PC-9 (cell line): ENCODE measurements at regions of chr10 and their contacts with region 1.

Region 1: DNA sequence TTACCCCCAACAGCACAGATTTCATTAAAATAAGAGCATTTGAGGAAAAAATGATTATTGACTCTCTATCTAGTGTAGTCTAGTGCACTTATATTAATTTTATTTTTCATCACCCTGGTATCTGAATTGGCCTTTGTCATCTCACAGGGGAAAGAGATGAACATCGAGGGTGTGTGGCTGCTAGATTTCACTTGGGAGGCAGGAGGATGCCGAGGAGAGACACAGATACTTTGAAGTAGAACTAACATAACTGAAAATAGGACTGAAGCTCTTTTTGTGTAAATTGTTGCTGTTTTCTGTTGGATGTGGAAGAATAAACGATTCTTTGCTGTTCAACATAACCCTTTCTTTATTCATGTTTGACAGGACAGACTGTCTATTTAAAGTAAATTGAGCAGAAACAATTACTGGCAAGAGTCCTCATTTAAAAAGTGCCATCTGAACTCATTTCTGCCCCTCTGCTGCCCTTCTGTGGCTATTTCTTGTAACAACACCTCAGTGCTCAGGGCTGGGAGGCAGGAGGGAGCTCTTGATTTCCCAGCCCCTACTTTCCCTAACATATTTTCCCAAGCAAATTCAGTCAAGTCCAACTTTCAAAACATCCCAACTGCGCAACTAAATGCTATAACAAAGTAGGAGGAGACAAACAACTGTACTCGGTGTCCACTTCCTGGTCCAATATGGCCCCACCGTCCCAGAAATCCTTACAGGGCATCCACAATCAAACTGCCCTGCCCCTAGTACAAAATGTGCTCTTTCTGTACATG is 15.6 kb downstream of the LYZL1 start:
- DNase-seq: peak; percentile 44 to 64
- H3K4me3 ChIP-seq: no peak overlapping the region
- H3K27ac ChIP-seq: no peak overlapping the region
- H3K4me1 ChIP-seq: 0 out of 2 replicates have a peak, but pooled peaks cover 4% of the 10 kb centered on the region
- H3K27me3 ChIP-seq: no peaks in the 10 kb centered on the region
- CTCF ChIP-seq: peak; percentile 78

Region 2: DNA sequence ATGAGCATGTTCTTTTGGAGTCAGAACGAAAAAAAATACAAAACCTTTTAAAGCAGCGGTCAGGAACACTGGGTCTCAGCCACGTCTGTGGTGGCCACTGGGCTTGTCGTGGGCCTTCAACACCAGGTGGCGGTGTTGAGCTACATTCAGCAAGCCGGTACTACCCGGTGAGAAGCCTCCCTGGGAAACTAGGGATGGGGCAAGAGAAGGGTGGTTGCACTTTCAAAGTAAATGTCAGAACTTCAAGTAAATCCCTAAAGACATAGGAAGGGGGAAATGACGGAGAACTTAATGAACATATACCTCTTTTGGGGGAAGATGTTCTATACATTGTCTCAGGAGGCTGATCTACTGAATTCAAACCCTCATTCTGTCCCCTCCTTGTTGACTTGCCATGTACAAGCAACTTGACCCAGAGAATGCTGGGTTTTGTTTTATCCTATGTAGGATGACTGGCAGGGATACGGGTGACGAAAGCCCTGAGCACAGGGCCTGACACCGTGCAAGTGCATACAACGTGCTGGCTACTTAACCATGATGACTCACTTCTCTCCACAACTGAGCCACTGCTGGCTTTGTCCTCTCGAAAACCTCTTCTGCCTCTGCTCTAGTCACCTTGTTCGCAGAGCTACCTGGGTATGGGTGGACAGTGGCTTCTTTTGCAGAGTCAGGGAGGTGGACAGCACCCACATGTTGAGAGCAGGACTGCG is 676.1 kb before region 1 on chr10:
- CTCF ChIA-PET with region 1: interaction called, 5 read pairs
- POLR2A ChIA-PET with region 1: no interaction called
- intact Hi-C with region 1: loop called (anchors 1 kb)
- DNase-seq: peak; percentile 51 to 74
- H3K4me3 ChIP-seq: no peak overlapping the region
- H3K27ac ChIP-seq: no peak overlapping the region
- H3K4me1 ChIP-seq: peaks cover 7% of the 10 kb centered on the region; the same call in 1 of the 2 replicates
- H3K27me3 ChIP-seq: no peaks in the 10 kb centered on the region
- CTCF ChIP-seq: peak; percentile 91

Region 3: DNA sequence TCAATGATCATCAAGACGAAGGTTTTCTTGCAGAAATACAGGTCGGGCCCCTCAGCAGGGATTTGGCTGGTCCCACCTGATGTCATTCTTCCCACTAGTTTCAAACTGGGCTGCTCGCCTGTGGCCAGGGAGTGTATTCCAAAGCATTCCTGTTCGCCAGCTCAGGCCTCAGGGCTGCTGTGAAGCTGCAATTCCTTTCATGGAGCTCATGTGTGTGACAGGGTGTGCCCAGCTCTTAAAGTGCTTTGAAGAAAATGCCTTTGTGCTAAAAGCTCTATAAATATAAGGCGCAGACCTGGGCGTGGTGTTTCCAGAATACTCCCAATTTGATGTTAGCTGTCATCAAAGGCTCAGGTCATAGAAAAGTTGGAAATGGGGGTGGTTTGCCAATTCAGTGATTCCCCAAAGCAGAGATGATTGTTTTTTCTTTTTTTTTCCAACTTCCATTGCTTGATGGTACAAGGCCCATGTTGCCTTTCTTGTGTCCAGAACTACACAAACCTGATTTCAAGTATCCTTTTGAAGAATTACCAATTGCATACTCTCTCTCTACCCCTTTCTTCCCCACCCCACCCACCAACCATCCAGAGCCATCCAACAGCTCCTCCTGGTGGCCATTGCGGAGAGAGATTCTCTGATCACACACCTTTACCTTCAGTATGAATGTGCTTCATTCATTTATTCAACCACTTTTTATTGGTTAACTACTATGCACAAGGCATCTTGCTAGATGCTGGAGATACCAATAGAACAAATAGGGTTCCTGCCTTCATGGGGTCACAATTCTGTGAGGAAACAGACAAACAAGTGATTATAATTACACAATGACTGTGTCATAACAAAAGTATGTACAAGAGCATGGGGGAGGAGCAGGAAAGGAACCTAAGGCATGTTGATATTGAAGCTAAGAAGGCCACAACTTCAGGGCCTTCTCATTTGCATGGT is 312.8 kb before region 1 on chr10:
- CTCF ChIA-PET with region 1: interaction called, 3 read pairs
- POLR2A ChIA-PET with region 1: no interaction called
- intact Hi-C with region 1: loop called (anchors 2 kb)
- DNase-seq: peak; percentile 42 to 49
- H3K4me3 ChIP-seq: no peak overlapping the region
- H3K27ac ChIP-seq: no peak overlapping the region
- H3K4me1 ChIP-seq: no peaks in the 10 kb centered on the region
- H3K27me3 ChIP-seq: no peaks in the 10 kb centered on the region
- CTCF ChIP-seq: peak; percentile 68

Region 4: DNA sequence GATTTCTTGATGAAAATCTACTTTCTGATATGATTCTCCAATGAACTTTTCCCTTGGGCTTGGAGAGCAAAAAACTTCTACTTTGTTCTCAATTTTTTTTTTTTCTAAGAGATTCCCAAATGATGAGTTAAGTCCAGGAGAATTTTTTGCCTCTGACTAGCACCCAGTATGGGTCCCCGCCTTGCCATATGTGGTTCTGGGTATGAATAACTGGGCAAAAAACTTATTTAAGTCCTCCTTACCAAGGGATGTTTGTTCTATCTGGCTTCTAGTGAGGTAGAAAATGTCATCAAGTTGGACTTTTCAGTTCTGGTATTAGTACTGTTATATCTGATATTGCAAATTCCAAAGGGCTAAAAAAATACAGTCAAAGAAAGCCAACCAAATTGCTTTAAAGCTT is 163.4 kb before region 1 on chr10:
- CTCF ChIA-PET with region 1: interaction called, 3 read pairs
- POLR2A ChIA-PET with region 1: no interaction called
- intact Hi-C with region 1: loop called (anchors 2 kb)
- DNase-seq: peak; percentile 40 to 74
- H3K4me3 ChIP-seq: no peak overlapping the region
- H3K27ac ChIP-seq: peak overlapping the region; percentile 32
- H3K4me1 ChIP-seq: peaks cover 19% of the 10 kb centered on the region
- H3K27me3 ChIP-seq: no peaks in the 10 kb centered on the region
- CTCF ChIP-seq: no peak

Region 5: DNA sequence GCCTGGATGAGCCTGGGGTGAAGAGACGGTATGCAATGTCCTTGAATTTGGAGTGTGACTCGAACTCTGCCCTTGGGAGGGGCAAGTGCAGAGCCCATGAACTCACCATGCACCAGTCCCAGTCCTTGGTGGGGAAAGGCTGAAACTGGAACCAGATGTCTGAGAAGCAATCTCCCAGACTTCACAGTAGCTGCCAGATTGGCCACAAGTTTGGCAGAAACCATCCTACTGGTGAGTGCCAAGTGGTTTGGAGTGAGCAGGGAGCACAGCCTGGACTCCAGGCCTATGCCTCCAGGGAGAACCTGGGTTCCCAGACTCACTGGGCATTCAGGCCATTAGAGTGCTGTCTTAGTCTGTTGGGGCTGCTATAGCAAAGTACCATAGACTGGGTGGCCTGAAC is 115.2 kb before region 1 on chr10:
- CTCF ChIA-PET with region 1: no interaction called
- POLR2A ChIA-PET with region 1: no interaction called
- intact Hi-C with region 1: no loop called
- DNase-seq: no peak
- H3K4me3 ChIP-seq: no peak overlapping the region
- H3K27ac ChIP-seq: no peak overlapping the region
- H3K4me1 ChIP-seq: no peaks in the 10 kb centered on the region
- H3K27me3 ChIP-seq: no peaks in the 10 kb centered on the region
- CTCF ChIP-seq: no peak

Region 6: GRCh38 chr10:29239569-29240472 is 64.6 kb before region 1 on chr10:
- CTCF ChIA-PET with region 1: no interaction called
- POLR2A ChIA-PET with region 1: no interaction called
- intact Hi-C with region 1: loop called (anchors 2 kb)
- DNase-seq: no peak
- H3K4me3 ChIP-seq: no peak overlapping the region
- H3K27ac ChIP-seq: no peak overlapping the region
- H3K4me1 ChIP-seq: no peaks in the 10 kb centered on the region
- H3K27me3 ChIP-seq: no peaks in the 10 kb centered on the region
- CTCF ChIP-seq: peak; percentile 49

Region 7: GRCh38 chr10:29328983-29329382 is 24.5 kb after region 1 on chr10:
- CTCF ChIA-PET with region 1: no interaction called
- POLR2A ChIA-PET with region 1: no interaction called
- intact Hi-C with region 1: no loop called
- DNase-seq: no peak
- H3K4me3 ChIP-seq: no peak overlapping the region
- H3K27ac ChIP-seq: no peak overlapping the region
- H3K4me1 ChIP-seq: no peaks in the 10 kb centered on the region
- H3K27me3 ChIP-seq: peaks cover 3% of the 10 kb centered on the region; the same call in 1 of the 2 replicates
- CTCF ChIP-seq: no peak

Region 8: GRCh38 chr10:29435809-29436501 is 131.5 kb after region 1 on chr10:
- CTCF ChIA-PET with region 1: interaction called, 12 read pairs
- POLR2A ChIA-PET with region 1: no interaction called
- intact Hi-C with region 1: no loop called
- DNase-seq: no peak
- H3K4me3 ChIP-seq: no peak overlapping the region
- H3K27ac ChIP-seq: no peak overlapping the region
- H3K4me1 ChIP-seq: no peaks in the 10 kb centered on the region
- H3K27me3 ChIP-seq: no peaks in the 10 kb centered on the region
- CTCF ChIP-seq: no peak